ENCODE measurements at regions of chr10 and their contacts with region 1.

Region 1: DNA sequence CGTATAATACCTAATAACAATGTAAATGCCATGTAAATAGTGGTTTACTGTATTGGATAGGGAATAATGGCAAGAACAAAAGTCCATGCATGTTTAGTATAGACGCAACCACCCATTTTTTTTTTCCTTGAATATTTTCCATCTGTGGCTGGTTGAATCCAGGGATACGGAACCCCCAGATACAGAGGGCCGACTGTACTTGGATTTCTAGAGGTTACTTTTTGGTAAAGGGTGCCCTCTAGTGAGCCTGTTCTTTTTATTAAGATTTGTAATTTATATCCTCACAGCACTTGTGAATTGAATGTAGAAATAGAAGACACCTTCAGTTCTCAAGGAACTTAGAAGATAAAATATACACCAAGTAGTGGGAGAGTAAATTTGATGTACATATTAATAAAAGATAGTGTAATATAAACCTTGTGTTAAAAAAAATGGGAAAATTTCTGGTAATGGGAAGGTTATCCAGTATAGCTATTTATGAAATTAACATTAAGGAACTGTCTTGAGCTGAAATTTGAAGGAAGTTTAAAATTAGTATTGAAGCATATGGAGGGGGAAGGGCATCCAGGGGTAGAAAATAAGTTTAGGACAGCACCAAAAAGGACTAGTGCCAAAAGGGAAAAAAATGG is 32.0 kb downstream of the EXOC6 start:
- DNase-seq: peak; percentile 62
- H3K4me3 ChIP-seq: no peak overlapping the region
- H3K27ac ChIP-seq: no peak overlapping the region
- H3K4me1 ChIP-seq: no peaks in the 10 kb centered on the region
- CTCF ChIP-seq: peak; percentile 95

Region 2: GRCh38 chr10:92517034-92517655 is 363.2 kb before region 1 on chr10:
- CTCF ChIA-PET with region 1: no interaction called
- POLR2A ChIA-PET with region 1: no interaction called
- intact Hi-C with region 1: loop called (anchors 2 kb)
- DNase-seq: peak; percentile 85
- H3K4me3 ChIP-seq: no peak overlapping the region
- H3K27ac ChIP-seq: no peak overlapping the region
- H3K4me1 ChIP-seq: no peaks in the 10 kb centered on the region
- CTCF ChIP-seq: peak; percentile 99

Region 3: DNA sequence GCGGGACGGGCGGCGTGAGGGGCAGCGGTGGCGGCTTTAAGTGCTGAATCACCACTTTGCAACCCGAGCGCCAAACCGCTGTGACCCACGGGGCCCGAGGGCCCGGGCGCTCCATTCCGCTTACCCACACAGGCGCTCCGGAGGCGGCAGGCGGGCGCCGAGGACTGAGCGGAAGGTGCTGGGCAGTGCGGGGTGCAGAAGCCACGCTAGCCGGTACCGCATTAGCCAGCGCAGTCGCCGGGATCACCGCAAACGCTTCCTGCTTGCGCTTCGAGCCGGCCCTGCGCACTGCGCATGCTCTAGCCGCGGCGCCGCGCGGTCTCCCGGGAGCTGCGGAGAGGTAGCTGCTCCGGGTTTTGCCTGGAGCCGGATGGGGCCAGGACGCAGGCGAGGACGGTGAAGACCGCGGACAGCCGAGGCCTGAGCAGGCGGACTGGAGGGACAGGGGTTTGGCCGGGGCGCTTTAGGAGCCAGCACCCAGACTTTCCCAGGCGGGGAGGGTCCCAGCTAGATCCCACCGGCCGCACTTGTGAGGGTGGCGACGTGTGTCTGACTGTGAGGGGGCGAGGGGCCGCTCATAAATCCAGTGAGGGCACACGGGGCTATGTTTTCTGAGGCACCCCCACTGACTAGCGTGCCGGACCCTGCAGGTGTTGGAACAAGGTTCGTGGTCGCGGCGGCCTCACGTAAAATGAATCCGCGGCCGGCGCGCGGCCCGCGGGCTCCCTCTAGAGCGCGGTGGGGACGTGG is 306.4 kb before region 1 on chr10 and contains the start of gene IDE:
- CTCF ChIA-PET with region 1: no interaction called
- POLR2A ChIA-PET with region 1: no interaction called
- intact Hi-C with region 1: loop called (anchors 5 kb)
- DNase-seq: peak; percentile 89
- H3K4me3 ChIP-seq: peak within 1 kb of the TSS; percentile 95
- H3K27ac ChIP-seq: peak within 1 kb of the TSS; percentile 68
- H3K4me1 ChIP-seq: peaks cover 29% of the 10 kb centered on the region
- CTCF ChIP-seq: peak; percentile 83
- total RNA-seq, gene IDE: 14.2 and 14.3 TPM in 2 replicates

Region 4: GRCh38 chr10:92848441-92849233 is 31.7 kb before region 1 on chr10 and contains the start of gene EXOC6:
- CTCF ChIA-PET with region 1: interaction called, 3 read pairs
- POLR2A ChIA-PET with region 1: no interaction called
- intact Hi-C with region 1: loop called (anchors 2 kb)
- DNase-seq: peak; percentile 93
- H3K4me3 ChIP-seq: peak within 1 kb of the TSS; percentile 83
- H3K27ac ChIP-seq: peak within 1 kb of the TSS; percentile 56
- H3K4me1 ChIP-seq: peaks cover 18% of the 10 kb centered on the region
- CTCF ChIP-seq: 0 out of 2 replicates have a peak, but pooled peaks have one; percentile 32
- total RNA-seq, gene EXOC6: 8.0 and 9.6 TPM in 2 replicates

Region 5: GRCh38 chr10:92867235-92867634 is 13.1 kb before region 1 on chr10:
- CTCF ChIA-PET with region 1: no interaction called
- POLR2A ChIA-PET with region 1: no interaction called
- intact Hi-C with region 1: no loop called
- DNase-seq: no peak
- H3K4me3 ChIP-seq: no peak overlapping the region
- H3K27ac ChIP-seq: no peak overlapping the region
- H3K4me1 ChIP-seq: no peaks in the 10 kb centered on the region
- CTCF ChIP-seq: no peak

Region 6: GRCh38 chr10:93352638-93353383 is 472.5 kb after region 1 on chr10:
- CTCF ChIA-PET with region 1: no interaction called
- POLR2A ChIA-PET with region 1: no interaction called
- intact Hi-C with region 1: loop called (anchors 2 kb)
- DNase-seq: peak; percentile 52
- H3K4me3 ChIP-seq: no peak overlapping the region
- H3K27ac ChIP-seq: no peak overlapping the region
- H3K4me1 ChIP-seq: no peaks in the 10 kb centered on the region
- CTCF ChIP-seq: peak; percentile 92